ENCODE measurements at regions of chrX and their contacts with region 1.

Region 1: DNA sequence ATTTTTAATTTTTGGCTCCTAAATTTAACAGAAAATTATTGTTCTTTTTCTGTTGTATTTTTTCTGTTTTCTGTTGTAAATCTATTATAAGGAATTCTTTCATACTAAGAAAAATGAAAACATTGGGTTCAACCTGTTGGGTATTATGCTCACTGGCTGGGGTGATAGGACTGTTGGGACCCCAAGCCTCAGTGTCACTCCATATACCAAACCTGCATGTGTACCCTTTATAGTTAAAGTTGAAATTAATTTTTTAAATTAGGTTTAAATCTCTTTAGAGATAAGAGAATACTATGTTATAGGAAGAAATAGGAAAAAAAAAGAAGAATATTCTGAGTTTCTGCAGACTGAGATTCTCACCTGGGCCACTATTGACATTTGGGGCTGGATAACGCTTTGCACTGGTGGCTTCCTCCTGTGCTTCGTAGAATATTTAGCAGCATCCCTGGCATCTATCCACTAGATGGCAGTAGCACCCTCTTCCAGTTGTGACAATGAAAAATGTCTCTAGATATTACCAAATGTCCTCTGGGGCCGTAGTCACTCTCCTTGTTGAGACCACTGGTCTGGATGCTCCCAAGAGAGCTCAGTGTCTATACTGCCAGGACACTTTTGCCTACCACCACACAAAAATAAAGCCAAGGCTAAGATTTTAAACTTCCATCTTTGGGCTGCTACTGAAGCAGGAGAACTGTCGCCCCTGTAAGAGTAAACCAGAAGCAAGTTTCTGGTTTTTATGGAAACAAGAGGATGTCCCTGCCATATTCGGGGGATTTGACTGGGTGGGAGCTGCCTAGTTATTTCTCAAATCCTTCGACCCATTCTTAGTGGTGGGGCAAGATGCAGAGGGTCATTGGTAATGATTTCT is 22.4 kb upstream of the CLTRN start:
- DNase-seq: peak in 5 of 10 donors; percentile 19 to 33 (median 22)

Region 2: GRCh38 chrX:15158736-15159406 is 528.2 kb before region 1 on chrX:
- intact Hi-C with region 1: no loop called
- DNase-seq: no peak

Region 3: DNA sequence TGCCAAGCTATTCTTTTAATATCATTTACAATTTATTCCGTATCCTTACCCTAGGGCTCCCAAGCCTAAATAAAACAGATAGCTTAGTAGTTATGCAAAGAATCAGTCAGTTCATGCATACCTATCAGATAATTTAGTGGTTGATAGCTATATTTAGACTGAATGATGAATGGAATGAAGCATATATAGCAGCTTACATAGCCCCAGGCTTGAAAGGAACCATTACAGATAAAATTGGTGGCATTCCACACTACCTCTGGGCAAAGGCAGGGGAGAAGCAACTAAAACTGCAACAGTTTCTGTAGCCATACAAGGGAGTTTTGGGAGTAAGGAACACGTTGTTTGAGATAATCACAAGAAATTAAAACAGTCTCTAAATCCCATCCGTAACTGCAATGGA is 89.0 kb before region 1 on chrX:
- intact Hi-C with region 1: no loop called
- DNase-seq: no peak

Region 4: GRCh38 chrX:15804563-15804962 is 117.5 kb after region 1 on chrX:
- intact Hi-C with region 1: no loop called
- DNase-seq: no peak

Region 5: GRCh38 chrX:16695079-16695676 is 1008.1 kb after region 1 on chrX:
- intact Hi-C with region 1: loop called (anchors 10 kb)
- DNase-seq: peak in 7 of 10 donors; percentile 17 to 76 (median 54)

Measured in posterior cingulate gyrus (tissue), 11 donors.